GM10248 (cell line): ENCODE measurements at regions of chr5 and their contacts with region 1.

Region 1: GRCh38 chr5:137320056-137321045 is 178.8 kb downstream of the SPOCK1 start:
- DNase-seq: peak; percentile 68
- CTCF ChIP-seq: peak; percentile 70

Region 2: GRCh38 chr5:137286025-137286610 is 34.2 kb before region 1 on chr5:
- CTCF ChIA-PET with region 1: interaction called, 14 read pairs
- POLR2A ChIA-PET with region 1: no interaction called
- DNase-seq: no peak
- CTCF ChIP-seq: no peak

Region 3: GRCh38 chr5:137310051-137310730 is 10.2 kb before region 1 on chr5:
- CTCF ChIA-PET with region 1: interaction called, 27 read pairs
- POLR2A ChIA-PET with region 1: no interaction called
- DNase-seq: no peak
- CTCF ChIP-seq: no peak

Region 4: GRCh38 chr5:137344723-137345322 is 24.5 kb after region 1 on chr5:
- CTCF ChIA-PET with region 1: interaction called, 13 read pairs
- POLR2A ChIA-PET with region 1: interaction called, 3 read pairs
- DNase-seq: peak; percentile 26
- CTCF ChIP-seq: peak; percentile 42

Region 5: DNA sequence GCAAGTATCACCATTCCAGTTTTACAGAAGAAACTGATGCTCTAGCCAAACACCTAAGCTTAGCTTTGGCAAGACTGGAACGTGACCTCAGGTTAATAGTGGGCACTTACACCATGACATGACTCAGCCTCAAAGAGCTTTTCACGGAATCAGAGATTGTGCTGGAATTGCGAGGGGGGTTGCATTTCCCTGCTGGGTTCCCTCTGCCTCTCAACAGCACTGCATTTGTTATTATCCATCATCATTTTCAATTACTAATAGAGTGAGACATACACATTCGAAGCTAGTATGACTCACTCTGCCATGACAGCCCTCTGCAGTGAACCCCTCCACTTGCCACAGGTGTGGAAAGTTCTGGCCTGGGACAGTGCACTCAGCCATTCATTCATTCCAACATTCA is 170.8 kb after region 1 on chr5:
- CTCF ChIA-PET with region 1: interaction called, 111 read pairs
- POLR2A ChIA-PET with region 1: no interaction called
- DNase-seq: no peak
- CTCF ChIP-seq: no peak

Region 6: GRCh38 chr5:137531266-137531665 is 210.9 kb after region 1 on chr5:
- CTCF ChIA-PET with region 1: no interaction called
- POLR2A ChIA-PET with region 1: no interaction called
- DNase-seq: no peak
- CTCF ChIP-seq: no peak